Cardiac septum (tissue), 1 donor: ENCODE measurements at regions of chr3 and their contacts with region 1.

Region 1: DNA sequence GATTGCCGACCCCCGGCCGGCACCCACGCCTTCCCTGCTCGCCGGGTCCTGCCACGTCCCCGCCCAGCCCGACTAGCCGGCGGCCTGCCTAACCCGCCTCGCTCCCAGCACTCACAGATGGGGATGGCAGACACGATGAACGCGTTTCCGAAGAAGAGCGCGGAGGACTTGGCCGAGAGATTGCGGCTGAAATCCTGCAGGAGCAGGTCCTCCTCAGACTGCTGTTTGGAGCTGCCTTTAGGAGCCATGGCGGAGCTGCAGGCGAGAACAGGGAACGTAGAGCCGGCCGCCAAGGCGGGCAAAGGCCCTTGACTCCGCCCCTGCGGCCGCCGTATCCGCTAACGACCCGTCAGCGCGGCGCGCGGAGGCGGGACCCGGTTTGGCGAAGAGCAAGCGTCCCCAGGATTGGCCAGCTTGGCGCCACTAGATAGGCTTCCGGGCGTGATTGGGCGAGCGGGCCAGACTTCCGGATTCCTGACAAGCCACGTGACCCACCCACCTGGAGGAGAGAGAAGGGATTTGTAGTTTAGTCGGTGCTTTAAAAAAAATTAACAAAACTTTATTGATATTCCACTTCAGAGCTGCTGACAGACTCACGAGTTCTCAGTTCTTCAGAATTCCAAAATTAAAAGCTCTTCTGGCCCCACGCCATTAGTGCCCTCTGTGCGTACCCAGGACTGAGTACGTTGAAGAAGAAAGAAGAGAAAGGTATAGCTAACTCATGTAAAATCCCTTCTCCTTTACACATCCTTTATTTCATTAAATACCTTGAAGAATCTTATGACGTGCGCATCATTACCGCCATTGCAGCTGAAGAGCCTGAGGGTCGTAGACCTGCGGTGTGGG is at the start of gene SSR3:
- DNase-seq: peak; percentile 100
- total RNA-seq, gene SSR3: 155 TPM

Region 2: DNA sequence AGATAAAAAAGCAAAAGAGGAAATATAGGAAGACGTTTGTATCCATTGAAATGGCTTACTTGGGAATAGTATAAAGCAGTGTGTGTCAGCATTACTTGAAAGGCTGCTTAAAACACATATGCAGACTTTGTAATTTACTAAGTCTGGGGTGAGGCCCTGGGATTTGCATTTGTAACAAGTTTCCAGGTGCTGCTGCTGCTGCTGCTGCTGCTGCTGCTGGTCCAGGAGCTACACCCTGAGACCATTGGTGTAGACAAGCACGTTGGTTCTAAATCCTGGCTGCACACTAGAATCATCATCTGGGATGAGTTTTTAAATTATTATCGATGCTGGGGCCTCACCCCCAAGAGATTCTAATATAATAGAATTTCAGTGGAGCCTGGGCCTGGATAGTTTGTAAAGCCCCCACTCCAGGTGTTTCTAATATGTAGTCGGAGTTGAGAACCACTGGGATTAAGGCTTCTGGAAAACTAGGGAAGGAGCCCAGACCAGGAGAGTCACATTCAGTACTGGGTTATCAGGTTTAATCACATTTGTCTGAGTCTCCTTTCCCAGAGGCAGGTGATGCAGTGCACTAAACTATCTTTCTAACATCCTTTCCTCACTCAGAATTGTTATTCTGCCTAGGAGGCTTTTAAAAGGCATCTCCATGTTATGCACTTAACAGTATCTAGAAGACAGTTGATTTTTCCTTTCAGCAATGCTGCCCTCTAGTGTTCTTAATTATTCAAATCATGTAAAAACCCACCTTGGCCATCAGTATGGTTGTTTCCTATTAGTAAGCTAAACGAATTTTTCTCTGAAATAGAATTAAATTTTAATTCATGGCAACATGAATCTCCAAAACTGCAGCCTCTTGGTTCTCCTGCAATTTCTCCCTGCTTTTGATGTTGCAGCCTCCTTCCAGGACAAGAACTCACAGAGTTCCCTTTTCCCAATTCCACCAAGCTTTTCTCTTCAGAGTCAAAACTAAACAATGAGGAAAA is 45.6 kb before region 1 on chr3:
- intact Hi-C with region 1: no loop called
- DNase-seq: no peak

Region 3: GRCh38 chr3:156816800-156817645 is 262.0 kb after region 1 on chr3:
- intact Hi-C with region 1: loop called (anchors 5 kb)
- DNase-seq: peak; percentile 93